ENCODE measurements at regions of chr20 and their contacts with region 1.

Region 1: GRCh38 chr20:58623826-58624473 is 27.1 kb upstream of the STX16 start:
- DNase-seq: no peak
- ATAC-seq: no peak
- H3K4me3 ChIP-seq: no peak overlapping the region
- H3K27ac ChIP-seq: no peak overlapping the region
- H3K4me1 ChIP-seq: peaks cover 8% of the 10 kb centered on the region
- H3K27me3 ChIP-seq: peaks cover 0 to 3% of the 10 kb centered on the region in 2 experiments; a peak in 2 of 4 replicates
- CTCF ChIP-seq: no peak
- EP300 ChIP-seq: no peak
- POLR2A ChIP-seq: no peak
- RAD21 ChIP-seq: no peak

Region 2: GRCh38 chr20:58479726-58480440 is 144.1 kb before region 1 on chr20:
- CTCF ChIA-PET with region 1: interaction called, 3 read pairs
- POLR2A ChIA-PET with region 1: interaction called, 12 read pairs
- RAD21 ChIA-PET with region 1: no interaction called
- SMC1A ChIA-PET with region 1: no interaction called
- in situ Hi-C with region 1: no loop called
- intact Hi-C with region 1: no loop called
- DNase-seq: no peak
- ATAC-seq: no peak
- H3K4me3 ChIP-seq: no peak overlapping the region
- H3K27ac ChIP-seq: no peak overlapping the region
- H3K4me1 ChIP-seq: no peaks in the 10 kb centered on the region
- H3K27me3 ChIP-seq: no peaks in the 10 kb centered on the region
- CTCF ChIP-seq: no peak
- EP300 ChIP-seq: no peak
- POLR2A ChIP-seq: no peak
- RAD21 ChIP-seq: no peak

Region 3: GRCh38 chr20:58692594-58693226 is 68.8 kb after region 1 on chr20 and contains the start of gene NPEPL1:
- CTCF ChIA-PET with region 1: no interaction called
- POLR2A ChIA-PET with region 1: no interaction called
- RAD21 ChIA-PET with region 1: no interaction called
- SMC1A ChIA-PET with region 1: no interaction called
- in situ Hi-C with region 1: no loop called
- intact Hi-C with region 1: no loop called
- DNase-seq: no peak
- ATAC-seq: peak; percentile 97
- H3K4me3 ChIP-seq: peak within 1 kb of the TSS; percentile 75
- H3K27ac ChIP-seq: 0 out of 2 replicates have a peak within 1 kb of the TSS, but pooled peaks have one; percentile 25
- H3K4me1 ChIP-seq: peaks cover 5% of the 10 kb centered on the region
- H3K27me3 ChIP-seq: no peaks in the 10 kb centered on the region
- CTCF ChIP-seq: peak in 2 of 3 experiments; percentile 36 to 49; a peak in 3 of 6 replicates
- EP300 ChIP-seq: no peak
- POLR2A ChIP-seq: 0 out of 2 replicates have a peak, but pooled peaks have one; percentile 58
- RAD21 ChIP-seq: peak; percentile 44
- polyA plus RNA-seq, gene NPEPL1: 0.08 to 0.80 TPM

Measured in GM12878 (cell line).